Mammary epithelial cell (primary cell): ENCODE measurements at regions of chr10 and their contacts with region 1.

Region 1: GRCh38 chr10:69434169-69434568 is 17.1 kb upstream of the TSPAN15 start:
- DNase-seq: no peak
- H3K4me3 ChIP-seq: no peak overlapping the region
- H3K27ac ChIP-seq: no peak overlapping the region
- H3K4me1 ChIP-seq: peaks cover 17% of the 10 kb centered on the region
- H3K27me3 ChIP-seq: no peaks in the 10 kb centered on the region
- CTCF ChIP-seq: no peak

Region 2: GRCh38 chr10:69180525-69181204 is 253.5 kb before region 1 on chr10:
- CTCF ChIA-PET with region 1: no interaction called
- dilution Hi-C with region 1: no loop called
- in situ Hi-C with region 1: no loop called
- intact Hi-C with region 1: no loop called
- DNase-seq: peak; percentile 31
- H3K4me3 ChIP-seq: peak overlapping the region; percentile 75 to 98 (median 88)
- H3K27ac ChIP-seq: peak overlapping the region; percentile 99
- H3K4me1 ChIP-seq: peaks cover 7% of the 10 kb centered on the region
- H3K27me3 ChIP-seq: no peaks in the 10 kb centered on the region
- CTCF ChIP-seq: no peak

Region 3: DNA sequence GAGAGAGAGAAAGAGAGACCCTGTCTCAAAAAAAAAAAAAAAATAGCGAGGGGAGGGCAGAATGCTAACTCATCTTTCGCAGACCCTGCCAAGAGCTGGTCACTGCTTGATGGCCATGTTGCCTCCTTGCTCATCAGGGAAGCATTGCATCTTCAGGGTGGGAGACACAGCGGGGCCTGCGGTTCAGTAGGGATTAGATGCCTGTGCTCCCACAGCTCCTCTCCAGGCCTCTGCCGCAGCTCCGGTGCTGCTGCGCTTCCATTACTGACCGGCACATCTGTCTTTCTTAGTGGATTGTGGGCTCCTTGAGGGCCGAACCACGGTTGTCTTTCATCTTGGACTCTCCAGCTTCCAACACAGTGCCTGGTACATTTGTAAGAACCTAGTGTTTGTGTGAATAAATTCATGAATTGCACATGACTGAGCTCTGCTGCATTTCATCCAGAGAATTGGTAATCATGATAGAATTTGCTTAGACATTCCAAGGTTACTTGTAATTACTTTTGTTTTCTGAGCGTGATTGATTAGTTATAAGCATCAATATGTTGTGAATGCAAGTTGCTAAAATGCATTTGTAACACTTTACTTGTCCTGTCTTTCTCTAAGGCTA is 139.0 kb before region 1 on chr10:
- CTCF ChIA-PET with region 1: no interaction called
- dilution Hi-C with region 1: no loop called
- in situ Hi-C with region 1: no loop called
- intact Hi-C with region 1: no loop called
- DNase-seq: no peak
- H3K4me3 ChIP-seq: no peak overlapping the region
- H3K27ac ChIP-seq: no peak overlapping the region
- H3K4me1 ChIP-seq: no peaks in the 10 kb centered on the region
- H3K27me3 ChIP-seq: peaks cover 6% of the 10 kb centered on the region
- CTCF ChIP-seq: no peak

Region 4: GRCh38 chr10:69506834-69507721 is 72.9 kb after region 1 on chr10:
- CTCF ChIA-PET with region 1: no interaction called
- dilution Hi-C with region 1: no loop called
- in situ Hi-C with region 1: loop called (anchors 5 kb)
- intact Hi-C with region 1: no loop called
- DNase-seq: no peak
- H3K4me3 ChIP-seq: no peak overlapping the region
- H3K27ac ChIP-seq: no peak overlapping the region
- H3K4me1 ChIP-seq: no peaks in the 10 kb centered on the region
- H3K27me3 ChIP-seq: peaks cover 6% of the 10 kb centered on the region
- CTCF ChIP-seq: no peak